Right cardiac atrium (tissue), 5 donors: ENCODE measurements at regions of chr20 and their contacts with region 1.

Region 1: GRCh38 chr20:64119681-64120341 is 12.4 kb upstream of the NPBWR2 start:
- DNase-seq: peak in 2 of 3 donors; percentile 42 to 55
- ATAC-seq: peak; percentile 34 to 47
- H3K4me3 ChIP-seq: no peak overlapping the region
- H3K27ac ChIP-seq: no peak overlapping the region
- H3K4me1 ChIP-seq: no peaks in the 10 kb centered on the region
- H3K27me3 ChIP-seq: no peaks in the 10 kb centered on the region

Region 2: DNA sequence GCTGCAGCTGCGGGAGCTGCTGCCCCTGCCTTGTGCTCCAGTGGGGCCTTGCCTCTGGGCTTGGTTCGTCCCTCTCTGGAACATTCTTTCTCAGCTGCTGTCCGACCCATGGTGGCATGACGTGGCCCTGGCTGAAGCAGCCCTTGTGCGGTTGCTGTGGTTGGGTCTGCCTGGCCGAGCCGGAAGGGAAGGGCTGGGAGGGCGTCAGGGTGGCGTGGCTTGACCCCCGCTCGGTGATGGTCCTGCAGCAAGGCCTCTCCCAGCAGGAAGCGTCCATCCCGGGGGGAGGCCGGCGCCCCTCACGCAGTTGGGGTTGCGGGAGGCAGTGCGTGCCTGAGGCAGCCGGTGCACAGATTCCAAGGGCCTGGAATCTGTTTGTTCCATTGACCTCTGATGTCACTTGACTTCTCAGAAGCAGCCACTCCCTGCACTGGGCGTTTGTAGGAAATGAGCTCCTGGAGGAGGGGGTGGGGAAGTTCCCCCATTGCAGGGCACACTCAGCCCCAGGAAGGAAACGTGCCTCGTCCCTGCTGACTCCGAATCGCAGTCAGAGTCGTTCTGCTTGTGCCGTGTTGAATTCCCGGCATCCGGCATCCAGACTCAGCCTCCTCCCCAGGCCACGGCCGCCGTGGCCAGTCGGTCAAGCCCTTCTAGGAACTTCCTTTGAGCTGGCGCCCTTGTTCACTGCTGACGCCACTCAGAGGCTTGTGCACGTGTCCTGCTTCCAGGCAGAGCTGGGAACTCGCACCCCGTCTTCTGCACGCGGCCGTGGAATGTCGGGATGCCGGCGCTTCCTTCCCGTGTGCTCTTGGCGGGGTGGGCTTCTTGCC is 433.1 kb before region 1 on chr20:
- intact Hi-C with region 1: no loop called
- DNase-seq: peak; percentile 90 to 92 (median 91)
- ATAC-seq: peak; percentile 63 to 83
- H3K4me3 ChIP-seq: no peak overlapping the region
- H3K27ac ChIP-seq: peak overlapping the region; percentile 83
- H3K4me1 ChIP-seq: peaks cover 8% of the 10 kb centered on the region
- H3K27me3 ChIP-seq: no peaks in the 10 kb centered on the region

Region 3: GRCh38 chr20:64038565-64039292 is 81.1 kb before region 1 on chr20:
- intact Hi-C with region 1: loop called in 1 of 4 experiments (anchors 5 kb)
- DNase-seq: peak; percentile 83 to 92 (median 92)
- ATAC-seq: peak; percentile 86
- H3K4me3 ChIP-seq: peak overlapping the region; percentile 49
- H3K27ac ChIP-seq: peak overlapping the region; percentile 46
- H3K4me1 ChIP-seq: no peaks in the 10 kb centered on the region
- H3K27me3 ChIP-seq: no peaks in the 10 kb centered on the region

Region 4: GRCh38 chr20:64079273-64080012 is 40.4 kb before region 1 on chr20 and contains the start of gene RGS19:
- intact Hi-C with region 1: loop called in 1 of 4 experiments (anchors 5 kb)
- DNase-seq: peak; percentile 85 to 93 (median 93)
- ATAC-seq: peak; percentile 64 to 65
- H3K4me3 ChIP-seq: peak within 1 kb of the TSS; percentile 85
- H3K27ac ChIP-seq: peak within 1 kb of the TSS; percentile 51
- H3K4me1 ChIP-seq: no peaks in the 10 kb centered on the region
- H3K27me3 ChIP-seq: no peaks in the 10 kb centered on the region
- total RNA-seq, gene RGS19: 6.3 to 9.1 (median 8.3) TPM